ENCODE measurements at regions of chr7 and their contacts with region 1.

Region 1: DNA sequence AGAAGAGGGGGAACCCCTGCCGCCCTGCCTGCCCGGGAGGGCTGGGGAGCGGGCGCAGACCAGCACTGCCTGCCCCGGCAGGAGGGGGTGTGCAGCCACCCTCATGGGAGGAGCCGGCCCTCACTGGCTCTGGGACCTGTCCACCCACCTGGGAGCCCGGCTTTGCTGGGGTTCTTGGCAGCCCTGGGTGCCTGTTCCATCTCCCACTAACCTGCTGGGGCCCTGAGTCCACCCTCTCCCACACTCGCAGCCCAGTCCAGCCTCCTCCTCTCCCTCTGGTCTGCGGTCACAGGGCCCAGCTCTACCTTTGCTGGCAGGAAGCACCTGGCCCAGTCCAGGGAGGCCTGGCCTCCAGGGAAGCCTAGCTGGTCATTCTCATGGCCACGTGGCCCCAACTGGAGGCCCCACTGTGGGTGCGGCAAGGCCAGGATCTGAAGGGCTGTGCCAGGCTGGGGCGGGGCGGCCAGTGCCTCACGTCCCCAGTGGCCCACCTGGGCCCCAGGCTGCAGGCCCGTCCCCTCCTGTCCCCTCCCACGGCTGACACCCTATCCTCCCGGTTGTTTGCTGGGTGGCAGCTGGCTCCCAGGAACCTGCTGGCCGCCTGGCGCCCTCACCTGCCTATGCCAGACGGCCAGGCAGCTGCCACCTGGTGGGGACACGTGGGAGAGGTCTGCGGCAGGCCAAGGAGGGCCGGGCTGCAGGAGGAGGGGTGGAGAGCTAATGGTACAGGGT is at the start of gene TMEM184A:
- DNase-seq: peak; percentile 91 to 99 (median 97)
- ATAC-seq: peak; percentile 84 to 89 (median 88)
- H3K4me3 ChIP-seq: peak within 1 kb of the TSS; percentile 23 to 47 (median 42)
- H3K27ac ChIP-seq: peak within 1 kb of the TSS; percentile 89 to 97 (median 93)
- H3K4me1 ChIP-seq: peaks cover 0 to 11% (median 4%) of the 10 kb centered on the region in 3 donors
- H3K27me3 ChIP-seq: no peaks in the 10 kb centered on the region
- CTCF ChIP-seq: peak; percentile 56 to 75 (median 59)
- total RNA-seq, gene TMEM184A: 15.2 to 27.5 (median 21.3) TPM

Region 2: GRCh38 chr7:1512781-1513656 is 43.0 kb before region 1 on chr7:
- intact Hi-C with region 1: loop called in 1 of 3 experiments (anchors 5 kb)
- DNase-seq: peak in 1 of 6 donors; percentile 43
- ATAC-seq: peak in 2 of 4 donors; percentile 61 to 72
- H3K4me3 ChIP-seq: no peak overlapping the region
- H3K27ac ChIP-seq: peak overlapping the region in 2 of 4 donors; percentile 50 to 54
- H3K4me1 ChIP-seq: peaks cover 0 to 2% (median 0%) of the 10 kb centered on the region in 3 donors
- H3K27me3 ChIP-seq: no peaks in the 10 kb centered on the region
- CTCF ChIP-seq: no peak

Region 3: DNA sequence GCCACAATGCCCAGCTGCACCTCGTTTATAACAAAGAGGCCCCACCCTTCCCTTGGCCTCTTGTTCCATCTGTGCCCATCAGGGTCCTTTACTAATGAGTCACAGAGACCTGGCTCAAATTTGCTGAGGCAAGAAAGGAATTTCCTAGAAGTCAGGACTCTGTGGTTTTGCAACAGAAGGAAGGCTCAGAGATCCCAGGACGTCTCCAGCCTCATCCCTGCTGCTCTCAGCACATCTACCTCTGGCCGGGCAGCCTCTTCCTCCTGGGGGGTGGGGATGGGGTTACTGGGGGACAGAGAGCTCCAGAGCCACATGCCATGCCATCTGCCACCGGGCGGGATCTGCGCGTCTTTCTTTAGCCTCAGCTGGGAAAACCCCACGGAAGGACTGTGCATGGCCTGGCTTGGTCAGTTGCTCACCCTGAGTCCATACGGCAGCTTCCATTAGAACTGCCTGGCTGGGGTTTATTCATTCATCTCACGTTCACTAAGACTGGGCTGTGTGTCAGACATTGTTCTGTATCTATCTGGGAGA is 55.8 kb after region 1 on chr7:
- intact Hi-C with region 1: no loop called
- DNase-seq: no peak
- ATAC-seq: peak in 1 of 4 donors; percentile 65
- H3K4me3 ChIP-seq: no peak overlapping the region
- H3K27ac ChIP-seq: no peak overlapping the region
- H3K4me1 ChIP-seq: no peaks in the 10 kb centered on the region
- H3K27me3 ChIP-seq: no peaks in the 10 kb centered on the region
- CTCF ChIP-seq: no peak